Left cardiac atrium (tissue), 4 donors: ENCODE measurements at regions of chr12 and their contacts with region 1.

Region 1: DNA sequence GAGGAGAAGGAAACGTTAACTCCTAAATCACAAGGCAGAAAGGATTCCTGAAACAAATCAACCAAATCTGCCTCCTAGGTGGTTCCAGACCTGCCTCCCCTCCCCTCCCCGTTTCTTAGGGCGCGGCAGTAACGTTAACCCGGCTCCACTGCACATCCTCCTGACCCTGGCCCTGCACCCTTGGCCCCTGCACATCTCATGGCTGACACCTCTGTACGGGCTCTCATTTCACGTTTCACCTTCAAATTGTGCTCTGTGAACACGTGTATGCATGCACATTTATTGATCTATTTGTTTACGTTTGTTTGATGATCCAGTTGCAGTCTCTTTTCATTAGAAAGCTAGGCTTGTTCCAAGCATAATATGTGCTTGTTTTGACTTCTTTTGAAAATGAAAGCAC is 358.1 kb downstream of the ADGRD1 start:
- DNase-seq: no peak
- ATAC-seq: no peak

Region 2: DNA sequence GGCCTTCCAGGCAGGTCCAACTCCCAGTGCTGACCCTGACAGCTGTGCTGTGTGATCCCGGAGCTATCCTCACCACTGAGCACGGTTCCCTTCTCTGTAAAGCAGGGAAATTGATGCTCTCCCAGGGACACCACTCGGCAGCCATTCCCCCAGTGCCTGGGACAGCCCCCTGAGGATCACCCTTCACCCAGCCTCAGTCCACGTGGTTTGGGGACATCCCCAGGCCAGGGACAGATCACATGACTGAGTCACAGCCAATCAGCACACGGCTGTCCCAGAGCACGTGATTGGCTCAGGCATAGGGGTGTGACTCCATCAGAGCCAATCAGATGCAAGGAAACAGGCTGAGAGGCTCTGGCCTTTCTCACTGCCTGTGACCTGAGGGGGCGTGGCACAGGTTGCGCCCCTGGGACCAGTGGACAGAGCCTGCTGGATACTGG is 330.4 kb after region 1 on chr12:
- intact Hi-C with region 1: loop called in 1 of 2 experiments (anchors 5 kb)
- DNase-seq: no peak
- ATAC-seq: peak in 1 of 2 donors; percentile 27